Activated naive CD4-positive, alpha-beta T cell treated with anti-CD3 and anti-CD28 coated beads, Interleukin-2, amount 10 ng/mL, durations not matched to agents 7 days and 5 days (primary cell): ENCODE measurements at regions of chr11 and their contacts with region 1.

Region 1: GRCh38 chr11:72585762-72586311 is 88.4 kb downstream of the PDE2A start:
- DNase-seq: peak; percentile 77
- H3K4me3 Mint-ChIP-seq: no peak overlapping the region
- H3K27ac Mint-ChIP-seq: no peak overlapping the region
- H3K4me1 Mint-ChIP-seq: peaks cover 34% of the 10 kb centered on the region
- H3K27me3 Mint-ChIP-seq: peaks cover 86% of the 10 kb centered on the region

Region 2: GRCh38 chr11:72425053-72425980 is 160.5 kb before region 1 on chr11:
- CTCF ChIA-PET with region 1: no interaction called
- DNase-seq: no peak
- H3K4me3 Mint-ChIP-seq: no peak overlapping the region
- H3K27ac Mint-ChIP-seq: no peak overlapping the region
- H3K4me1 Mint-ChIP-seq: peaks cover 45% of the 10 kb centered on the region
- H3K27me3 Mint-ChIP-seq: no peaks in the 10 kb centered on the region

Region 3: DNA sequence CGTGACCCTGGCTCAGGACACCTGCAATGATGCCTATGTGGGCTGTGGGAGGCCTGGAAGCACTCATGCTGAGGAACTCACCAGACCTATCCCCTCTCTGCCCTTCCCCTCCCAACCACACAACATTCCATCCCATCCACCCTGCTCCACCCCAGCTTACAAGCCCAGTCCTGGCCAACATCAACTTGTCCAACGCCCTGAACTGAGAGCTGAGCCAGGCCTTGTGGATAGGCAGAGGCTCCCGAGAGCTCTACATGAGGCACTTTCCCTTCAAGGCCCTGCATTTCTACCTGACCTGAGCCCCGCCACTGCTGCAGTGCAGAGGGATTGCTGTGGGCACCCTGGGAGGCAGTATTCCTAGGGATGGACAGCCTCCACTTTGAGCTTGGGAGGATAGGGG is 24.0 kb before region 1 on chr11:
- CTCF ChIA-PET with region 1: no interaction called
- DNase-seq: no peak
- H3K4me3 Mint-ChIP-seq: no peak overlapping the region
- H3K27ac Mint-ChIP-seq: no peak overlapping the region
- H3K4me1 Mint-ChIP-seq: no peaks in the 10 kb centered on the region
- H3K27me3 Mint-ChIP-seq: peaks cover 7% of the 10 kb centered on the region

Region 4: GRCh38 chr11:72635309-72635915 is 49.6 kb after region 1 on chr11:
- CTCF ChIA-PET with region 1: interaction called, 17 read pairs
- DNase-seq: no peak
- H3K4me3 Mint-ChIP-seq: no peak overlapping the region
- H3K27ac Mint-ChIP-seq: no peak overlapping the region
- H3K4me1 Mint-ChIP-seq: no peaks in the 10 kb centered on the region
- H3K27me3 Mint-ChIP-seq: peaks cover 43% of the 10 kb centered on the region

Region 5: GRCh38 chr11:72642884-72643511 is 57.2 kb after region 1 on chr11:
- CTCF ChIA-PET with region 1: interaction called, 92 read pairs
- DNase-seq: peak; percentile 71
- H3K4me3 Mint-ChIP-seq: peak overlapping the region; percentile 55
- H3K27ac Mint-ChIP-seq: no peak overlapping the region
- H3K4me1 Mint-ChIP-seq: peaks cover 5% of the 10 kb centered on the region
- H3K27me3 Mint-ChIP-seq: peaks cover 13% of the 10 kb centered on the region

Region 6: GRCh38 chr11:72683782-72684200 is 98.0 kb after region 1 on chr11:
- CTCF ChIA-PET with region 1: interaction called, 65 read pairs
- DNase-seq: peak; percentile 77
- H3K4me3 Mint-ChIP-seq: no peak overlapping the region
- H3K27ac Mint-ChIP-seq: peak overlapping the region; percentile 21
- H3K4me1 Mint-ChIP-seq: peaks cover 45% of the 10 kb centered on the region
- H3K27me3 Mint-ChIP-seq: peaks cover 21% of the 10 kb centered on the region